Sigmoid colon (tissue), 7 donors: ENCODE measurements at regions of chrX and their contacts with region 1.

Region 1: DNA sequence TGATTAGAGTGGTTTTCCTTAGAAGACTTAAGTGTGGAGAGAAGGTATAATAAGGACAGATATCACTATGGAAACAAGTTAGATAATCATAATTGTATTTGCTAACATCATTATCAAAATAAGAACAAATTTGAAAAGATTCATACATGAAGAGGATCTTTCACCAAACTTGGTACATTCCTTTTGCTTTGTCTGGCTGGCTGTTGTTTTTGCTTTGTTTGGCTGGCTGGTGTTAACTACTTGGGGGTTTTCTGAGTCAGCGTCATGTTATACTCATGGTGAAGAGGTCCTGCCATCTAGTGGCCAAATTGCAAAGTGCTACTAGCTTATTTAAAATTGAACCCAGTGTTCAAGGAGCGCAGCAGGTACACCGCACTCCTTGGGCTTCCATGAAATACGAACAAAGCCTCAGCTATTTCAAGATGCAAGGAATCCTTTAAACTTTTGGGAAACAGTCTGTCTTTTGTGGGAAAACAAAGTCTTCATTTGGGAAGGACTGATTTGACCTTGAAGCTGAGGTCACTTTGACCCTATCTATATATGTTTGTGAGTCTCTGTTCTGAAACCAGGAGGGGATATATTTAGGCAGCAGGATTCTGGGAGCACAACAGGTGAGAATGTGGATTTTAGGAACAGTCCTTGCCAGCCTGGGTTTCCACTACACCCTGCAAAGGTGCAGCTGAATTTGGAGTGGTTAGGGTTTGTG is 129.7 kb downstream of the PLS3 start:
- DNase-seq: peak; percentile 68
- H3K4me3 ChIP-seq: no peak overlapping the region
- H3K27ac ChIP-seq: peak overlapping the region in 3 of 4 donors; percentile 25 to 76 (median 49)
- H3K4me1 ChIP-seq: no peaks in the 10 kb centered on the region
- H3K27me3 ChIP-seq: no peaks in the 10 kb centered on the region
- CTCF ChIP-seq: peak; percentile 48 to 69 (median 62)
- EP300 ChIP-seq: no peak
- POLR2A ChIP-seq: no peak

Region 2: DNA sequence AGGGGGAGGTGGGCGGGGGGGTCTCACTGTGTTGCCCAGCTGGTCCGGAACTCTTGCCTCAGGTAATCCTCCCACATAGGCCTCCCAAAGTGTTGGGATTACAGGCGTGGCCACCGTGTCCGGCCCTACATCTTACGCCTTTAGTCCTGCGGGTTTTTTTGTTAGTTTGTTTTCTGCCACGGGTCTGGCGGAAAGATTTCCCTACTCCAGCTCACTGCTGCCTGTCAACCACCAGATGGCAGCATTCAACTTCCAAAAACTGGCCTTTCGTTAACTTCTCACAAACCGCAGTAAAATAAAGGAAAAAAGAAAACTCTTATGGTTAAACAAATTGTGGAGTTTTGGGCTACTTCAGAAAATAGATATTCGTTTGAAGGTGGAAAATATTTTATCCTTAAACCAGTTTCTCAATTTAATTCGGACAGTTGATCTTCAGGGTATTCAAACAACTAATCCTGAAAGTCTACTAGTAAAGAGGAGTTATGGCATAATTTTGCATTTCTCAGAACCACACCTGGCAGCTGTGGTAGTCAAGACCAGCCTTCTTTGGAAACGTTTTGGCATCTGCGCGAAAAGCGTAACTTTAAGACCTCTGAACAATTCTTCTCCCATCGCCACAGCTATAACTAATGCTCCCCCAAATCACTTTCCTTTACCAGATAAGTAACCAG is 360.0 kb before region 1 on chrX:
- intact Hi-C with region 1: loop called (anchors 5 kb)
- DNase-seq: peak; percentile 71
- H3K4me3 ChIP-seq: peak overlapping the region in 1 of 4 donors; percentile 26
- H3K27ac ChIP-seq: no peak overlapping the region
- H3K4me1 ChIP-seq: no peaks in the 10 kb centered on the region
- H3K27me3 ChIP-seq: no peaks in the 10 kb centered on the region
- CTCF ChIP-seq: peak; percentile 45 to 76 (median 52)
- EP300 ChIP-seq: no peak
- POLR2A ChIP-seq: no peak

Region 3: GRCh38 chrX:115649461-115650063 is 41.1 kb before region 1 on chrX:
- intact Hi-C with region 1: loop called (anchors 5 kb)
- DNase-seq: no peak
- H3K4me3 ChIP-seq: no peak overlapping the region
- H3K27ac ChIP-seq: peak overlapping the region in 1 of 4 donors; percentile 5
- H3K4me1 ChIP-seq: no peaks in the 10 kb centered on the region
- H3K27me3 ChIP-seq: peaks cover 0 to 3% (median 0%) of the 10 kb centered on the region in 3 donors
- CTCF ChIP-seq: no peak
- EP300 ChIP-seq: no peak
- POLR2A ChIP-seq: no peak